Activated CD4-positive, alpha-beta T cell treated with anti-CD3 and anti-CD28 coated beads, Interleukin-2, amount 10 ng/mL, durations not matched to agents 24 days and 14 days (primary cell): ENCODE measurements at regions of chr6 and their contacts with region 1.

Region 1: GRCh38 chr6:53348371-53349208 is at the start of gene ELOVL5:
- DNase-seq: peak; percentile 99
- H3K4me3 Mint-ChIP-seq: peak within 1 kb of the TSS; percentile 93
- H3K27ac Mint-ChIP-seq: peak within 1 kb of the TSS; percentile 92
- H3K4me1 Mint-ChIP-seq: peaks cover 40% of the 10 kb centered on the region
- H3K27me3 Mint-ChIP-seq: peaks cover 19% of the 10 kb centered on the region
- total RNA-seq, gene ELOVL5: 122 and 126 TPM in 2 replicates

Region 2: DNA sequence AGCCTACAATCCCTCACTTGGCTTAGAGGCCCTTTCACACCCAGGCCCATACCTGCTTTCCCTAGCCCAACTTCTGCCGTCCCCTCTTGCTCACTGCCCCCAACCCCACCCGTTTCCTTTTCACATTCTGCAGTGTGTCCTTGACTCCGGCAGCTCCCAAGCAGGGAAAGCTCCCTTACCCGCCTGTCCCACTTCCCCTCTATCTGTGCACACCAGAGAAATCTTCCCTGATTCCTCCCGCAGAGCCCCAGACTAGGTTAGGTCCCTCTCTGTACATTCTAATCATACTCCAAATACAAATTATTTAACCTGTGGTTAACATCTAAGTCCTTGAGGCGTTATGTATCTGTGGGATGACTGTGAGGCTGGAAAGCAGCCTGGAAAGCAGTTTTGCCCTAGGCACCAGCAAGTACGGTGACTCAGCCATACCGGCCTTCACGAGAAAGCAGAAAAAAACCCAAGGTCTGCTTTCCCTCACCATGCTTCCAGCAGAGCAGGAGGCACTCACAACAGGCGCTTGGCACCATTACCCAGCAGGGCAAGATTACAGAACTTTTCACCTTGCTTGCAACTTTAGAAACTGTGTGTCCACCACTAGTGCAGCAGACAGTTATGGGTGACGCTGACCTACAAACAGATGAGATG is 22.1 kb before region 1 on chr6:
- intact Hi-C with region 1: no loop called
- DNase-seq: no peak
- H3K4me3 Mint-ChIP-seq: no peak overlapping the region
- H3K27ac Mint-ChIP-seq: no peak overlapping the region
- H3K4me1 Mint-ChIP-seq: peaks cover 57% of the 10 kb centered on the region
- H3K27me3 Mint-ChIP-seq: no peaks in the 10 kb centered on the region

Region 3: DNA sequence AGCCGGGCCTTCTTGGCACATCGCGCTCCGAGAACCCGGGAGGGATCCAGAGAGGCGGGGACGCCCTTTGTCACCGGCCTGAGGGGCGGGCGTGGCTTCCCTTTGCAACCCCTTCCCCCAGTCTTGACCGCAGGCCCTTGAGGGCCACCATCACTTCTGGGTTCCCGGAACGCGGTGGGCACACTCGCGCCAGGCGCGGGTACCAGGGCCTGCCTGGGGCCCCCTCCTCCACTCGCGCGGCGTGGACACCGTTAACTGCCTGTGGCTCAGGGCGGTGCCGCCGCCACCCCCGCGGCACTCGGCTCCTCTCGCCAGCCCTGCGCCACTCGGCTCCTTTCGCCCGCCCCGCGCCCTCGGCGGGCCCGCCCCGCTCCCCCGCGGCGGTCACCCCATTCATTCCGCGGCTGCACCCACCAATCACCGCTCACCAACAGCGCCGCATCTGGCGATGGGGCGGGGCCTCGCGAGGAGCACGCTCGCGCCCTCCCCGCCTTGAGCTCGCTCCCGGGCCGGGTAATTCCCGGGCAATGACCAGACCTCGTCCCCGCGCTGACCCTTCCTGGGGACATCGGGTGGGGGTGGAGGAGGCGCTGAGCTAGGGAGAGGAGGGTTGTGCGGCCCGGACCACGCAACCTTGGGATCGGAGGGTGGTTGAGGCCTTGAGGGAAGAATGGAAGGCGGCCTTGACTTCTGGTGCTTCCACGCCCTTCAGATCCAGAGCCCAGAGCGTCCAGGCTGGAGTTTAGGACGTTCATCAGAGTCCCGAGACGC is 10.7 kb after region 1 on chr6:
- intact Hi-C with region 1: loop called (anchors 1 kb)
- DNase-seq: peak; percentile 98
- H3K4me3 Mint-ChIP-seq: peak overlapping the region; percentile 92
- H3K27ac Mint-ChIP-seq: peak overlapping the region; percentile 100
- H3K4me1 Mint-ChIP-seq: peaks cover 39% of the 10 kb centered on the region
- H3K27me3 Mint-ChIP-seq: peaks cover 6% of the 10 kb centered on the region

Region 4: GRCh38 chr6:53391170-53391569 is 42.6 kb after region 1 on chr6:
- intact Hi-C with region 1: no loop called
- DNase-seq: no peak
- H3K4me3 Mint-ChIP-seq: no peak overlapping the region
- H3K27ac Mint-ChIP-seq: no peak overlapping the region
- H3K4me1 Mint-ChIP-seq: no peaks in the 10 kb centered on the region
- H3K27me3 Mint-ChIP-seq: peaks cover 8% of the 10 kb centered on the region